ENCODE measurements at regions of chr1 and their contacts with region 1.

Region 1: DNA sequence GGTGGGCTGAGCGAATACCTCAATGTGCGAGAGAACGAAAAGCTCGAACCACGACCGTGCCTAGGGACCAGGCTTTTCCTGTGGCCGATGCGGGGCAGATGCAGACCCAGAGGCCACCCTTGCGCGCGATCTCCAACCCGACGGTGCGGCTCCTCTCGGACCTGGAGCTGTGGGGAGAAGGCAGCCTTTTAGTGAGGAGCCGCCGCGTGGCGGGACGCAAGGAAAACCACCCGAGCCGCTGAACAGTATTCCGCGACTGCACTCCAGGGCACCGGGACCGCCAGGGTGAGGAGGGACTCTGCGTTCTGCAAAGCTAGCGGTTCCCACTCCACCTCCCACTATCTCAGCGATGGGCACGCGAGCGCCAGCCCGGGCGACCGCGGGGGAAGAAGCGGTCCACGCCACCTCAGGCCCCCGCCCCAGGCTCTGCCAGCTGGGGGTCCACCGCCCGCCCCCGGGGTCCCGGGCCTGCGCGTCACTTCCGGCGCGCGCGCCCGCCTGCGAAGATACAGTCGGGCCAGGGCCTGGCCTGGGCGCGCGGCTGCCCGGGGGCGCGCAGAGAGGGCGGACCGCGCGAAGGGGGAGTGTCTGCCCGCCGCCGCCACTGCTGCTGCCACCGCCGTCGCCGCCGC is 66.5 kb upstream of the PRKACB start:
- DNase-seq: peak; percentile 80
- ATAC-seq: peak; percentile 90
- H3K4me3 Mint-ChIP-seq: peak overlapping the region; percentile 91
- H3K27ac Mint-ChIP-seq: peak overlapping the region; percentile 75
- H3K4me1 Mint-ChIP-seq: peaks cover 11% of the 10 kb centered on the region
- H3K27me3 Mint-ChIP-seq: no peaks in the 10 kb centered on the region
- CTCF ChIP-seq: no peak

Region 2: GRCh38 chr1:83860490-83861221 is 216.9 kb before region 1 on chr1:
- CTCF ChIA-PET with region 1: no interaction called
- POLR2A ChIA-PET with region 1: no interaction called
- intact Hi-C with region 1: loop called (anchors 2 kb)
- DNase-seq: peak; percentile 73
- ATAC-seq: peak; percentile 91
- H3K4me3 Mint-ChIP-seq: peak overlapping the region; percentile 79
- H3K27ac Mint-ChIP-seq: peak overlapping the region; percentile 64
- H3K4me1 Mint-ChIP-seq: peaks cover 7% of the 10 kb centered on the region
- H3K27me3 Mint-ChIP-seq: no peaks in the 10 kb centered on the region
- CTCF ChIP-seq: peak; percentile 81

Region 3: GRCh38 chr1:84090447-84091245 is 13.1 kb after region 1 on chr1:
- CTCF ChIA-PET with region 1: no interaction called
- POLR2A ChIA-PET with region 1: interaction called, 4 read pairs
- intact Hi-C with region 1: loop called (anchors 1 kb)
- DNase-seq: no peak
- ATAC-seq: peak; percentile 31
- H3K4me3 Mint-ChIP-seq: peak overlapping the region; percentile 53
- H3K27ac Mint-ChIP-seq: peak overlapping the region; percentile 67
- H3K4me1 Mint-ChIP-seq: peaks cover 21% of the 10 kb centered on the region
- H3K27me3 Mint-ChIP-seq: no peaks in the 10 kb centered on the region
- CTCF ChIP-seq: no peak

Region 4: GRCh38 chr1:84271441-84272151 is 194.0 kb after region 1 on chr1:
- CTCF ChIA-PET with region 1: no interaction called
- POLR2A ChIA-PET with region 1: no interaction called
- intact Hi-C with region 1: loop called (anchors 10 kb)
- DNase-seq: no peak
- ATAC-seq: peak; percentile 95
- H3K4me3 Mint-ChIP-seq: peak overlapping the region; percentile 60
- H3K27ac Mint-ChIP-seq: peak overlapping the region; percentile 85
- H3K4me1 Mint-ChIP-seq: peaks cover 25% of the 10 kb centered on the region
- H3K27me3 Mint-ChIP-seq: no peaks in the 10 kb centered on the region
- CTCF ChIP-seq: no peak

Region 5: DNA sequence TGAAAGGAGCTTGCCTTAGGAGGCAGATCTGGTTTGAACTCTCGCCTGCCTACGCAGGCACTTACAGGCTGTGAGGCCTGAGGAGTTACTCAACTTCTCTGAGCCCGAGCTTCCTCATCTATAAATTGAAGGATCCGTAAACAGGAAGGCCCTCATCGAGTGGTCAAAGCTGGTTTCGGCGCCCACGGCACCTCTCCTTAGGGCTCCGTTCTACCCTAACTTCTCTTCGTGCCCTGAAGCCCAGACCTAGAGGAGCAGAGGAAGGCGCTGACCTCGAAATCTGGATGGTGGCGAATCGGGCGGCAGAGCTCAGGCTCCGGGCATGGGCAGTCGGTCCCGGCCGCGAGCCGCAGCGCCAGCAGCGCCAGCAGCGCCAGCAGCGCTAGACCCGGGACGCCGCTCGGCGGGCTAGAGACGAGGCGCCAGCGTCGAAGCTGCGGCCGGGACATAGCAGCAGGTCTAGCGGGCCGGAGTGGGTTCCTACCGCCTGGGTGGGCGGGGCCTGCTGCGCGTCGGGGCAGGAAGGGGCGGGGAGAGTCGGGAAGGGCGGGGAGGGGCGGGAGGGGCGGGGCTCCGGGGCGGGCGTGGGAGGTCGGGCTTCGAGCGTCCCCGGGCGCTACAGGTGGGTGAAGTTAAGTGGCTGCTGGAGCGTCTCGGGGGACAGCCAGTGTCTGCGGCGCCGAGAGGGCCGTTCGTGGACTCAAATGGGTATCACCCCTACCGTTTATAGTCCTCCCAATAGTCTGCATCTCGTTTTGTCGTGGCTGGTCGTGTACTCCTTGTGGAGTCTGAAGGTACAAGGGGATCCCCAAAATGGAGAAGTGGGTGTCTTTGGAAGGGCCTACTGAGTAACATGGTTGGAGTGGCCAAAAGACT is 496.6 kb after region 1 on chr1 and contains the start of gene CTBS:
- CTCF ChIA-PET with region 1: no interaction called
- POLR2A ChIA-PET with region 1: no interaction called
- intact Hi-C with region 1: loop called (anchors 2 kb)
- DNase-seq: peak; percentile 81
- ATAC-seq: peak; percentile 91
- H3K4me3 Mint-ChIP-seq: peak within 1 kb of the TSS; percentile 96
- H3K27ac Mint-ChIP-seq: peak within 1 kb of the TSS; percentile 99
- H3K4me1 Mint-ChIP-seq: peaks cover 40% of the 10 kb centered on the region
- H3K27me3 Mint-ChIP-seq: no peaks in the 10 kb centered on the region
- CTCF ChIP-seq: no peak
- total RNA-seq, gene CTBS: 11.8 and 13.2 TPM in 2 replicates

Region 6: GRCh38 chr1:85259118-85259911 is 1181.7 kb after region 1 on chr1 and contains the start of gene C1orf52:
- CTCF ChIA-PET with region 1: no interaction called
- POLR2A ChIA-PET with region 1: no interaction called
- intact Hi-C with region 1: no loop called
- DNase-seq: peak; percentile 99
- ATAC-seq: peak; percentile 96
- H3K4me3 Mint-ChIP-seq: peak within 1 kb of the TSS; percentile 98
- H3K27ac Mint-ChIP-seq: peak within 1 kb of the TSS; percentile 92
- H3K4me1 Mint-ChIP-seq: peaks cover 37% of the 10 kb centered on the region
- H3K27me3 Mint-ChIP-seq: no peaks in the 10 kb centered on the region
- CTCF ChIP-seq: peak; percentile 88
- total RNA-seq, gene C1orf52: 31.4 and 32.0 TPM in 2 replicates

Measured in activated B cell treated with CpG ODN at 0.5 μM for 24 hours (primary cell).